Tibial artery (tissue), 4 donors: ENCODE measurements at regions of chr3 and their contacts with region 1.

Region 1: DNA sequence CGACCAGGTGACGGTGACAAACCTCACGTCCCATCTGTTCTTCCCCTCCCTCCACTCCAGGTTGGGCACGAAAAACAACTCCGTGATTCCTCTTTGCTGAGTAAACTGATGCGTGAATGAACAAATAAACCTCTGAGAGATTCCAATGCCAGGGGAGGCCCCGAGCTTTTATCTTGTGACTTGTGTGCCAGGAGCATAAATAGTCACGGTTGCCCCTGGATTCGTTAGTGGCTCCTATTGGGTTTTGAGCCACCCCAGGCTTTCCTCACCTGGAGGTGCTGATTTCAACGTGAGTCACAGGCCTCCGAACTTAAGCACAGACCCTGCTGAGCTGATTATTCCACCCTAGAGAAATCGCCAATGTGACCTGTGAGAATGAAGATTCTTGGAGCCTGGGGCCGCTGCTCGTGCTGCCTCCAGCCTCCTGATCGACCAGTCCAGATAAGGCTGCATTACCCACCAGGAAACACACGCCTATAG is 119.2 kb downstream of the SHQ1 start:
- DNase-seq: no peak
- H3K4me3 ChIP-seq: no peak overlapping the region
- H3K27ac ChIP-seq: no peak overlapping the region
- H3K4me1 ChIP-seq: peaks cover 0 to 7% (median 0%) of the 10 kb centered on the region in 4 donors
- H3K27me3 ChIP-seq: peaks cover 0 to 5% of the 10 kb centered on the region in 2 donors
- CTCF ChIP-seq: no peak

Region 2: DNA sequence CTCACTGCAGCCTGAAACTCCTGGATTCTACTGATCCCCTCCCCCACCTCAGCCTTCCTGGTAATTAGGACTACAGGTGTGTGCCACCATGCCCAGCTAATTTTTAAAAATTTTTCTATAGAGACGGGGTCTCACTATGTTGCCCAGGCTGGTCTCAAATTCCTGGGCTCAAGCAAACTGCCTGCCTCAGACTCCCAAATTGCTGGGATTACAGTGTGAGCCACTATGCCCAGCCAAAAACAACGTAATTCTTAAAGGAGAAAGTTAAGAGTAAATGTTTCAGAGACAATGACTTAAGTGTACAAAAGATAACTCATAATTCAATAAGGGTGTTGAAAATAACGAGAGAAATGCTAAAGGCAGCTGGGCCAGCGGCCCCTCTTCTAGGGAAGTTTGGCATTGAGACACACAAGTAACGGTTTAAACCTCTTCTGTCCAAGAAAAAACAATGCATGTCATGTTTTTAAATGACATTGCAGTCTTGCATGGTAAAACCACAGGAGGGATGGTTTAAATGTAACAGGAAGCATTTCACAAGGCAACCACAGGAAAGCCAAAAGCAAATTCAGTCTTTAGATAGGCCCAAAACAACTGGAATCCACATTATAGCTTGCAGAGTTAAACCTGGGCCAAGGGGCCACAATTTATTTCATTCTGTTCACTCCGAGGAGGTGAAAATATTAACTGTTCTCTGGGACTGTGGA is 949.2 kb before region 1 on chr3:
- intact Hi-C with region 1: loop called (anchors 5 kb)
- DNase-seq: no peak
- H3K4me3 ChIP-seq: no peak overlapping the region
- H3K27ac ChIP-seq: no peak overlapping the region
- H3K4me1 ChIP-seq: peaks cover 0 to 10% (median 6%) of the 10 kb centered on the region in 4 donors
- H3K27me3 ChIP-seq: peaks cover 2 to 78% of the 10 kb centered on the region in 2 donors
- CTCF ChIP-seq: no peak